ENCODE measurements at regions of chr1 and their contacts with region 1.

Region 1: GRCh38 chr1:151459331-151460046 is at the start of gene POGZ:
- DNase-seq: peak; percentile 88
- H3K4me3 ChIP-seq: peak within 1 kb of the TSS; percentile 69 to 87 (median 79)
- H3K27ac ChIP-seq: peak within 1 kb of the TSS; percentile 64
- H3K4me1 ChIP-seq: peaks cover 6% of the 10 kb centered on the region
- H3K27me3 ChIP-seq: no peaks in the 10 kb centered on the region
- CTCF ChIP-seq: no peak
- total RNA-seq, gene POGZ: 28.0 to 48.1 TPM

Region 2: GRCh38 chr1:150789396-150789795 is 670.1 kb before region 1 on chr1:
- CTCF ChIA-PET with region 1: no interaction called
- dilution Hi-C with region 1: no loop called
- in situ Hi-C with region 1: no loop called
- intact Hi-C with region 1: no loop called
- DNase-seq: peak; percentile 28
- H3K4me3 ChIP-seq: no peak overlapping the region
- H3K27ac ChIP-seq: no peak overlapping the region
- H3K4me1 ChIP-seq: no peaks in the 10 kb centered on the region
- H3K27me3 ChIP-seq: no peaks in the 10 kb centered on the region
- CTCF ChIP-seq: no peak

Region 3: GRCh38 chr1:150979092-150980056 is 480.1 kb before region 1 on chr1:
- CTCF ChIA-PET with region 1: no interaction called
- dilution Hi-C with region 1: no loop called
- in situ Hi-C with region 1: no loop called
- intact Hi-C with region 1: no loop called
- DNase-seq: peak; percentile 73
- H3K4me3 ChIP-seq: no peak overlapping the region
- H3K27ac ChIP-seq: no peak overlapping the region
- H3K4me1 ChIP-seq: peaks cover 47% of the 10 kb centered on the region
- H3K27me3 ChIP-seq: no peaks in the 10 kb centered on the region
- CTCF ChIP-seq: peak; percentile 100

Region 4: GRCh38 chr1:151472856-151473731 is 13.6 kb after region 1 on chr1:
- CTCF ChIA-PET with region 1: interaction called, 7 read pairs
- dilution Hi-C with region 1: no loop called
- in situ Hi-C with region 1: no loop called
- intact Hi-C with region 1: loop called (anchors 1 kb)
- DNase-seq: peak; percentile 16
- H3K4me3 ChIP-seq: peak overlapping the region; percentile 32 to 41 (median 36)
- H3K27ac ChIP-seq: no peak overlapping the region
- H3K4me1 ChIP-seq: peaks cover 6% of the 10 kb centered on the region
- H3K27me3 ChIP-seq: no peaks in the 10 kb centered on the region
- CTCF ChIP-seq: no peak

Region 5: DNA sequence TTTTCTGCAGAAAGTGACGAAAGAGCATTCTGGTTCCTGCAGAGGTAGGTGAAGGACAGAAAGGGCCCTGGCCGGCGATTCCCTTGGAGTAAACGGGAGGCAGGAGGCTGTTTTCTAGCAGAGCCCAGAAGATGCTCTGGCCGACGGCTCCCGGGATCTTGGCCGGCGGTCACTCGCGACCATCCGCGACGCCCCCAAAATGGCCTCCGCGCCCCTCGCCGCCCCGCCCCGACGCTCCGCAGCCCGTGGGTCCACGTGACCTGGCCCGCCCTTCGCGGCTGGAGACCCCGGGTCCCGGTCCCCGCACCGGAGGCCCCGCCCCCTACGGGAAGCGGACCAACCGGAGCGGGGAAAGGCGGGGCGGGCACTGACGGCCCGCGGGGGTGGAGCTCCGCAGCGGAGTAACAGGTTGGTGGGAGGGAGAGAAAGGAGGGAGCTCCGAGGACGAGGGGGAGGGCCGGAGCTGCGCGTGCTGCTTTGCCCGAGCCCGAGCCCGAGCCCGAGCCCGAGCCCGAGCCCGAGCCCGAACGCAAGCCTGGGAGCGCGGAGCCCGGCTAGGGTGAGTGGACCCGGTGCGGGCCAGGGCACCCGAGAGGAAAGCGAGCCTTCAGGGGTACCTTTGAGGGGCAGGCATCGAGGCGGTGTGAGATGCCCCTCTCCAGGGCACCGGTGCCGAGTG is 51.6 kb after region 1 on chr1 and contains the start of gene CGN:
- CTCF ChIA-PET with region 1: no interaction called
- dilution Hi-C with region 1: no loop called
- in situ Hi-C with region 1: no loop called
- intact Hi-C with region 1: loop called (anchors 5 kb)
- DNase-seq: peak; percentile 79
- H3K4me3 ChIP-seq: peak within 1 kb of the TSS; percentile 56 to 62 (median 62)
- H3K27ac ChIP-seq: no peak within 1 kb of the TSS
- H3K4me1 ChIP-seq: peaks cover 36% of the 10 kb centered on the region
- H3K27me3 ChIP-seq: no peaks in the 10 kb centered on the region
- CTCF ChIP-seq: no peak
- total RNA-seq, gene CGN: 2.0 to 3.7 TPM

Region 6: DNA sequence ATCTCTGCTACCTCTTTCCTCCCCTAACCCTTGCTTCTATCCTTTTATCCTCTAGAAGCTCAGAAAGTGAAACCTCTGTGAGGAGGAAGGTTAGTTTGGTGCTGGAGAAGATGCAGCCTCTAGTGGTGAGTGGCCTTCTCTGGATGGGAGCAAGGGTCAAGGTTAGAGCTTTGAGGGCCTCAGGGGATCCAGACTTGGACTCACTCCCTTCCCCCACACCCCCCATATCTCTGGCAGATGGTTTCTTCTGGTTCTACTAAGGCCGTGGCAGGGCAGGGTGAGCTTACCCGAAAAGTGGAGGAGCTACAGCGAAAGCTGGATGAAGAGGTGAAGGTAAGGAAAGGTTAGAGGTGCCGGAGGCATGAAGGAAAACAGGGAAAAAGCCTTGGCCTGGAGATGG is 60.9 kb after region 1 on chr1:
- CTCF ChIA-PET with region 1: no interaction called
- dilution Hi-C with region 1: loop called (anchors 5 kb)
- in situ Hi-C with region 1: no loop called
- intact Hi-C with region 1: no loop called
- DNase-seq: no peak
- H3K4me3 ChIP-seq: no peak overlapping the region
- H3K27ac ChIP-seq: no peak overlapping the region
- H3K4me1 ChIP-seq: peaks cover 7% of the 10 kb centered on the region
- H3K27me3 ChIP-seq: no peaks in the 10 kb centered on the region
- CTCF ChIP-seq: no peak

Region 7: DNA sequence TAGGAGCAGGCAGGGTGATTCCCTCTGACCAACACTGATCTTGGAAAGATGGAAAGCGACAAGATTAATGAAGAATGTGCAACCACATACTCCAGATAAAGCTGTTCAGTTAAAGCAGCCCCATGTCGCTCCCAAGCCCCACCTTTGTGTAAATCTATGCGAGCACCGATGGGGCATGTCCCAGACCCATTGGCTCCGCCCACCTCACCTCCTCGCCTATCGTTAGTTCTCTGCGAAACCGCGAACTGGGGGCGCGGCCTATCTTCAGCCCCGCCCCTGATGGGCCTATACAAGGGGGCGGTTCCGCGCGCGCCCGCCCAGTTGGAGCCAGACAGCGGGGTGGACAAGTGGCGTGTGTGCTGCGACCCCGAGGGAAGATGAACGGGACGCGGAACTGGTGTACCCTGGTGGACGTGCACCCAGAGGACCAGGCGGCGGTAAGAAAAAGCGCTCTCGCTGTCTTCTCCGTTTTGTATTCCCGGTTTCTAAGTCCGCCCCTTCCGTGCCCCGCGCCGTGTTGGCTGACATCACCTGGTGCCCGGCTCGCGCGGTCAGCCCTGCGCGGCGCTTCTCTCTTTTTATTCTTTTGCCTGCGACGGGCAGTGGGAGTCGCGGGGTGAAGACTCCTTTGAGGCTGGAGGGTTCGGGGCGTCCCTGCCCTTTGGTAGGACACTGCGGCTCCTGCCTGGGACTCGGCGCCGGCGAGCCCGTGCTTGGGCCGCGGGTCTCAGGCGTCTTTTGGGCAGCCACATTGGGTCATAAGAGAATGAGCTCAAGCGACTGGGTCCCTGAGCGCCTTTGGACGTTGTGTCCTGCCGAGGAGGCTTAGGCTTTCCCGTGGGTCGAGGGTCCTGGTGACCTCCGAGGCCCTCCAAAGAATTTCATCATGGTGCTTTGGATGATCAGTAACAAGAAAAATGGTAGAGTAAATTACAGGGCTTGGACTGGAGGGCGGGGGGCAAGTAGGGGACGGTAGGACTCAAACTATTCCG is 80.8 kb after region 1 on chr1 and contains the start of gene TUFT1:
- CTCF ChIA-PET with region 1: interaction called, 11 read pairs
- dilution Hi-C with region 1: no loop called
- in situ Hi-C with region 1: no loop called
- intact Hi-C with region 1: loop called (anchors 2 kb)
- DNase-seq: peak; percentile 90
- H3K4me3 ChIP-seq: peak within 1 kb of the TSS; percentile 72 to 76 (median 76)
- H3K27ac ChIP-seq: peak within 1 kb of the TSS; percentile 66
- H3K4me1 ChIP-seq: peaks cover 40% of the 10 kb centered on the region
- H3K27me3 ChIP-seq: no peaks in the 10 kb centered on the region
- CTCF ChIP-seq: no peak
- total RNA-seq, gene TUFT1: 43.3 to 59.0 TPM